ENCODE measurements at regions of chr1 and their contacts with region 1.

Region 1: GRCh38 chr1:110106013-110106941 is 6.0 kb upstream of the UBL4B start:
- DNase-seq: peak; percentile 27 to 95 (median 68)

Region 2: DNA sequence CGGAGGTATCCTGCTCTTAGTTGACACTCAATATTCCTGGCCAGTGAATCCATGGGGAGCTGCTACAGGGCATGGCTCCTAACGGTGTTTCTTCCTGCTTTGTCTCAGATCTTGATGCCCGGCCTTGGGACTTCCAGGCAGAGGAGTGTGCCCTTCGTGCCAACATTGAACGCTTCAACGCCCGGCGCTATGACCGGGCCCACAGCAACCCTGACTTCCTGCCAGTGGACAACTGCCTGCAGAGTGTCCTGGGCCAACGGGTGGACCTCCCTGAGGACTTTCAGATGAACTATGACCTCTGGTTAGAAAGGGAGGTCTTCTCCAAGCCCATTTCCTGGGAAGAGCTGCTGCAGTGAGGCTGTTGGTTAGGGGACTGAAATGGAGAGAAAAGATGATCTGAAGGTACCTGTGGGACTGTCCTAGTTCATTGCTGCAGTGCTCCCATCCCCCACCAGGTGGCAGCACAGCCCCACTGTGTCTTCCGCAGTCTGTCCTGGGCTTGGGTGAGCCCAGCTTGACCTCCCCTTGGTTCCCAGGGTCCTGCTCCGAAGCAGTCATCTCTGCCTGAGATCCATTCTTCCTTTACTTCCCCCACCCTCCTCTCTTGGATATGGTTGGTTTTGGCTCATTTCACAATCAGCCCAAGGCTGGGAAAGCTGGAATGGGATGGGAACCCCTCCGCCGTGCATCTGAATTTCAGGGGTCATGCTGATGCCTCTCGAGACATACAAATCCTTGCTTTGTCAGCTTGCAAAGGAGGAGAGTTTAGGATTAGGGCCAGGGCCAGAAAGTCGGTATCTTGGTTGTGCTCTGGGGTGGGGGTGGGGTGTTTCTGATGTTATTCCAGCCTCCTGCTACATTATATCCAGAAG is 52.5 kb before region 1 on chr1:
- intact Hi-C with region 1: loop called (anchors 1 kb)
- DNase-seq: peak; percentile 40 to 96 (median 76)

Measured in posterior cingulate gyrus (tissue), 11 donors.